ENCODE measurements at regions of chr5 and their contacts with region 1.

Region 1: DNA sequence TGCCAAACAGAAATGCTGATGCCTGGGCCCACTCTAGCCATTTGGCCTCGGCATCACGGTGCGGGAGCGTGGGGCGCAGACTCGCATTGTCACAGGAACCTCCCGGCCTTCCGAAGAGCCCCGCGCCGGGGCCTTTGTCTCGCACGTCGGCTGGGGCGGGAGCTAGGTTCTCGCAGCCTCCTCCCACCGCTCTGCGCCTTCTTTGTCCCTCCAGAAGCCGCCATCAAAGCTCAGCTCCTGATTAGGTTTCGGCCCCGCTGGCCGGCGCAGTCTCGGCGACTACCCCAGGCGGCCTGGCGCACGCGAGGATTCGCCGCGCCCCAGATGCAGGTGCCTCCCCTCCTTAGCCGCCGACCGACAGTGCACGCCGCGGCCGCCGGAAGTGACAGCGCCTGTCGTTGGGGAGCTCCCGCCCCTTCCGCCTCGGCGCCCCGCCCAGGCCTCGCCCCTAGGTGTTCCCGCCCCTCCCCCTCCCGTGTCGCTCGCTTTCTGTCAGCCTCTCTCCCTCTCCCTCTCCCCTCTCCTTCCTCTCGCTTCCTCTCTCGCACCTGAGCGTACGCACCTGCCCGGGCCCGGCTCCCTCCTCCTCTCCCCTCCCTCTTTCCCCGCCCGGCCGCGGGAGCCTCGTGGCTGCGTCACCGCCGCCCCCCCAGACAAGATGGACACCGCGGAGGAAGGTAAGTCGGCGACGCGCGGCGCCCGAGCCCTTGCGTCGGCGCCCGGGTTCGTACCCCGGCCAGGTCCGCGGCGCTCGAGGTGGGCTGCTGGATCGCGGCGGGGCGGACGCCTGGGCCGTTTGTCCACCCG is at the start of gene MARCHF6:
- DNase-seq: no peak
- H3K4me3 ChIP-seq: peak within 1 kb of the TSS; percentile 80
- CTCF ChIP-seq: no peak

Region 2: GRCh38 chr5:10233505-10233904 is 119.9 kb before region 1 on chr5:
- CTCF ChIA-PET with region 1: no interaction called
- POLR2A ChIA-PET with region 1: no interaction called
- DNase-seq: peak; percentile 96
- H3K4me3 ChIP-seq: no peak overlapping the region
- CTCF ChIP-seq: peak; percentile 39

Region 3: GRCh38 chr5:10329820-10330481 is 23.5 kb before region 1 on chr5:
- CTCF ChIA-PET with region 1: no interaction called
- POLR2A ChIA-PET with region 1: interaction called, 10 read pairs
- DNase-seq: peak; percentile 53
- H3K4me3 ChIP-seq: peak overlapping the region; percentile 18; the same call in 1 of the 2 replicates
- CTCF ChIP-seq: no peak